Activated B cell treated with CpG ODN at 0.5 μM for 24 hours (primary cell): ENCODE measurements at regions of chr3 and their contacts with region 1.

Region 1: DNA sequence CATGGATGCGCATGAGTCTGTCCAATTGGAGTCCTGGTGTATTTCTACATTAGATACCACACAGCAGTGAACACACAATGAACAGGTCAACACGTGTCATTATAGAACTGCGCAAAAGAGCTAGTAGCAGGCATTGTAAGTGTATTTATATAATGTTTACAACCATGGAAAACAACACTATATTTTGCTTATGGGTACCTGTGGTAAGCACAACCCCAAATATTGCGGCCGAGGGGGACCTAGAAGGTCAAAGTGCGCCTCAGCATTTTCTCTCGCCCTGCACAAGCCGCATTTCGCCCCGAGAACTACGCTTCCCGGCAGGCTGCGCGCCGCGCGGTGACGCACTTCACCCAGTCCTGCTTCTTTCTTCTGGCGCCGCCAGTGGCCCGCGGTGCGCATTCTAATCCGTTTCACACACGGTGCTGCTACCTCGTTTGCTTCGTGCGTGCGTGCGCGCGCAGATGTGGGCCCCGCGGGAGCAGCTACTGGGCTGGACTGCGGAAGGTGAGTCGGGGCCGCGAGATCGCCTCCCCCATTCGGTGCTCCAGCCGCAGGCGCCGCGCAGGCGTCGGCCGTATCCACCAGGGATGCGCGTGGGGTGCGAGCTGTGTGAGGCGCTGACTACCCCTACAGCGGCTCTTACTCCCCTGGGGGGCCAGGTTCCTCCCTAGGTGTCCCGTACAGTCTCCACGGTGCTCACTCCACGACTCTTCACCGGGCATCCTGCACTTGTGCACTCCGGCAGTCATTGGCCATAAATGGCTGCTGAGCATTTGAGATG is at the start of gene ZNF589:
- DNase-seq: peak; percentile 94
- ATAC-seq: peak; percentile 96
- H3K4me3 Mint-ChIP-seq: peak within 1 kb of the TSS; percentile 92
- H3K27ac Mint-ChIP-seq: peak within 1 kb of the TSS; percentile 94
- H3K4me1 Mint-ChIP-seq: peaks cover 17% of the 10 kb centered on the region
- H3K27me3 Mint-ChIP-seq: no peaks in the 10 kb centered on the region
- CTCF ChIP-seq: no peak
- total RNA-seq, gene ZNF589: 12.4 and 19.2 TPM in 2 replicates

Region 2: GRCh38 chr3:48188266-48189201 is 52.4 kb before region 1 on chr3 and contains the start of gene CDC25A:
- CTCF ChIA-PET with region 1: interaction called, 3 read pairs
- POLR2A ChIA-PET with region 1: interaction called, 5 read pairs
- intact Hi-C with region 1: loop called (anchors 1 kb)
- DNase-seq: peak; percentile 79
- ATAC-seq: peak; percentile 99
- H3K4me3 Mint-ChIP-seq: peak within 1 kb of the TSS; percentile 88
- H3K27ac Mint-ChIP-seq: peak within 1 kb of the TSS; percentile 80
- H3K4me1 Mint-ChIP-seq: peaks cover 13% of the 10 kb centered on the region
- H3K27me3 Mint-ChIP-seq: peaks cover 9% of the 10 kb centered on the region
- CTCF ChIP-seq: no peak
- total RNA-seq, gene CDC25A: 1.7 and 1.8 TPM in 2 replicates

Region 3: DNA sequence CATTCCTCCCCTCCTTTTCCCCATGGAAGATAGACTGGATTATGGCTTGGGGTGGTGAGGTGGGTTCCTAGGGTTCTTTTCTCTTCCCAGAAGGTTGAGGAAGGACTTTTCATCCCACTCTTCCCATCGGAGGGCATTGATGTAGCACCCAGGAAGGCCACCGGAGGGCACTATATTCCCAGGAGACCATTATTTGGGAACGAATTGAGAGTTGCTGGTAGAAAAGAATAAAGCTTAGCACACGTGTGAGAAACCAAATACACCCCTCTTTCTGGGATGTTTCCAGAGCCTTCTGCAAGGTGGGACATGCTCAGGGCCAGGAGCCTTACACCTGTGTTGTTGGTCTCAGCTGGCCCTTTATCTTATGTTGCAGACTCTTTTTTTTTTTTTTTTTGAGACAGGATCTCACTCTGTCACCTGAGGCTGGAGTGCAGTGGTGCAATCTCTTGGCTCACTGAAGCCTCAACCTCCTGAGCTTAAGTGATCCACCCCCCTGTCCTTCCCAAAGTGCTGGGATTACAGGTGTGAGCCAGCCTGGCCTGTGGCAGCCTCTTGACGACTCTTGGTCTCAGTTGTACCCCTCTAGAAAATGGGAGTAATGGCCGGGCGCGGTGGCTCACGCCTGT is 46.3 kb before region 1 on chr3:
- CTCF ChIA-PET with region 1: interaction called, 3 read pairs
- POLR2A ChIA-PET with region 1: interaction called, 4 read pairs
- intact Hi-C with region 1: loop called (anchors 1 kb)
- DNase-seq: no peak
- ATAC-seq: peak; percentile 50
- H3K4me3 Mint-ChIP-seq: no peak overlapping the region
- H3K27ac Mint-ChIP-seq: no peak overlapping the region
- H3K4me1 Mint-ChIP-seq: peaks cover 4% of the 10 kb centered on the region
- H3K27me3 Mint-ChIP-seq: no peaks in the 10 kb centered on the region
- CTCF ChIP-seq: no peak

Region 4: GRCh38 chr3:48222616-48223513 is 18.0 kb before region 1 on chr3 and contains the start of gene CAMP:
- CTCF ChIA-PET with region 1: no interaction called
- POLR2A ChIA-PET with region 1: interaction called, 10 read pairs
- intact Hi-C with region 1: no loop called
- DNase-seq: no peak
- ATAC-seq: peak; percentile 71
- H3K4me3 Mint-ChIP-seq: peak within 1 kb of the TSS; percentile 44
- H3K27ac Mint-ChIP-seq: peak within 1 kb of the TSS; percentile 73
- H3K4me1 Mint-ChIP-seq: peaks cover 65% of the 10 kb centered on the region
- H3K27me3 Mint-ChIP-seq: no peaks in the 10 kb centered on the region
- CTCF ChIP-seq: no peak
- total RNA-seq, gene CAMP: 0.29 TPM in 1 of 2 replicates, not detected in the other

Region 5: DNA sequence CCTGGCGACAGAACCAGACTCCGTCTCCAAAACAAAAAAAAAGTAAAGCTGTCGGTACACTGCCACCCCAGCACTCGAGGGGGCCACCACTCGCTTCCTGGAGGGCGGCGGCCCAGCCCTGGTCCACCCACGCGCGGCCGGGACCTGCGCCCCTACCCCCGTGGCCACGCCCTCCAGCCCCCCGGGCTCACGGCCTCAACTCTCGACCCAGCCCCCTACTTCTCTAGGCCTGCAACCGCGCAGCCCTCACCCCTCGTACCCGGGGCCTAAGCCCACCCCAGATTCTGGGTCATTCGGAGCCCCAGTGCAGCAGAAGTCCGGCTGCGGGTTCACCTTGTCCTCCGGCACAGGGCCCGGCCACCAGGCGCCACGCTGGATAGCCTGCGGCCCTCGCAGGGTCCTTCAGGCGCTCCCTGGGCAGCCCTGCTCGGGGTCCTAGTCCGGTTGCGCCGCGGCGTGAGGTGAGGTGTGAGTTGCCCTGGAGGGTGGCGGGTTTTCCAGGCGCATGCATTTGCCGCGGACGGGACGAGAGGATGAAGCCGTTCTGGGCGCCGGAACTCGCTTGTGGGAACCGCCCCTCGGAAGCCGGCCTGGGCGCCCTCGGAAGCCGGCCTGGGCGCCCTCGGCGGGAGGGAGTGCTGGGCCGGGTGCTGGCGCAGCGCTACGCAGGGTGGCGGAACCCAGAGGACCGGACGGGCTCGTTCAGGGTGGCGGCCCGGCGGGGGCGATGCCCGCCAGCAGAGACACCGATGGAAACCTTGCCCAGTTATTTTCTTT is 60.3 kb after region 1 on chr3:
- CTCF ChIA-PET with region 1: no interaction called
- POLR2A ChIA-PET with region 1: interaction called, 19 read pairs
- intact Hi-C with region 1: loop called (anchors 1 kb)
- DNase-seq: peak; percentile 95
- ATAC-seq: peak; percentile 91
- H3K4me3 Mint-ChIP-seq: peak within 1 kb of the TSS; percentile 97
- H3K27ac Mint-ChIP-seq: peak within 1 kb of the TSS; percentile 98
- H3K4me1 Mint-ChIP-seq: peaks cover 42% of the 10 kb centered on the region
- H3K27me3 Mint-ChIP-seq: no peaks in the 10 kb centered on the region
- CTCF ChIP-seq: no peak

Region 6: DNA sequence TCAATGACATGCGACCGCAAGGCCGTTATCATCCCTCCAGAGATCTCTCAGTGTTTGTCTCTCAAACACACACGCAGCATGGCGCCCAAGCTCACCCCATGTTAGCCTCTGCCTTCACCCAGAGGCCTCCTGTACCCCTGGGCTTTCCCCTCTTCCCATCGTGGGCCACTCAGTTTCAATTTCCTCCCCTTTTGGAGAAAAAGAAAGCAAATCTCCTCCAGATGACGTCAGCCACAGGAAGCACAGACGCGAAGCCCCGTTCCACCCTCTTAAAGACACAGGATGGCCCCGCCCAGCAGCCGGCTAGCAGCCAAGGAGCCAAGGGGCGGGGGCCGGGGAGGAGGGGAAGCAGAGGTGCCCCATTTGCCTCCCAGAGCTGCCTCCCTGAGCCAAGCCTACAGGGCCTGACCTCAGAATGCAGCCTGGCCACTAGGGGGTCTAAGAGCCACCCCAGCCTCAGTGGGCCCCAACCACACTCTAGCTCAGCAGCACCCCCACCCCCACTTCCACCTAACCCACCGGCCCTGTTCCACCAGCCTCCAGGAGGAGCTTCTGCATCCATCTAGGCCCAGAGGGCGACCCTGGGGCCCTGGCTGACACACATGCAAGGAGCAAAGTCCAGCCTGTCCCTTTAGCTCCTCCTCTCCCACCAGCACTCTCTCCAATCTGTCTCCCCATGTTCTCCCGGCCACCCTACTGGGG is 232.2 kb after region 1 on chr3:
- CTCF ChIA-PET with region 1: no interaction called
- POLR2A ChIA-PET with region 1: no interaction called
- intact Hi-C with region 1: loop called (anchors 1 kb)
- DNase-seq: peak; percentile 84
- ATAC-seq: peak; percentile 89
- H3K4me3 Mint-ChIP-seq: peak overlapping the region; percentile 89
- H3K27ac Mint-ChIP-seq: peak overlapping the region; percentile 99
- H3K4me1 Mint-ChIP-seq: peaks cover 79% of the 10 kb centered on the region
- H3K27me3 Mint-ChIP-seq: no peaks in the 10 kb centered on the region
- CTCF ChIP-seq: no peak